ENCODE measurements at regions of chr2 and their contacts with region 1.

Region 1: DNA sequence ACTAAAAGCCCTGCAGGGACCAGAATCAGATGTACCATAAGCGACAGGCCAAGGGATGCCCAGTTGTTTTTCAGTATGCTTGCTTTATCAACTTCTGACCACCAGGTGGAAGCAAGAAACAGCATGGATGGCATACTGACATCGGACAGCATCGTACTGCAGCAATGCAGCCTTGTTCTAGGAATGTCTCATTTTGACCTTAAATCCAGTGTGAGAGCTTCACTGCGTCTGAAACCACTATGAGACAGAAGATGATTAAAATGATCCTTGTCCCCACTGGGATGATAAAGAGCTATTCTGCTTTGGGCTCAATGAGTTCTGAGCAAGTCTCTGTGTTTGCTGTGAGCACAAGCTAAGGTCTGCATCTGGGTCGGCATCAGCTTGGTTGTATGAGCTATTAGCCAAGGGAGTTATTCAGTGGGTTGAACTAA is 54.3 kb downstream of the CDK15 start:
- DNase-seq: peak in 1 of 2 donors; percentile 75
- ATAC-seq: peak; percentile 64 to 80 (median 73)
- H3K4me3 ChIP-seq: no peak overlapping the region
- H3K4me3 Mint-ChIP-seq: no peak overlapping the region
- H3K27ac ChIP-seq: no peak overlapping the region
- H3K27ac Mint-ChIP-seq: no peak overlapping the region
- H3K4me1 ChIP-seq: no peaks in the 10 kb centered on the region
- H3K4me1 Mint-ChIP-seq: peaks cover 6 to 12% of the 10 kb centered on the region in 2 donors
- H3K27me3 ChIP-seq: peaks cover 4% of the 10 kb centered on the region
- H3K27me3 Mint-ChIP-seq: peaks cover 19 to 25% of the 10 kb centered on the region in 2 donors
- CTCF ChIP-seq: peak; percentile 69

Region 2: GRCh38 chr2:202178342-202178958 is 317.8 kb after region 1 on chr2:
- intact Hi-C with region 1: loop called (anchors 1 kb)
- DNase-seq: peak in 1 of 2 donors; percentile 76
- ATAC-seq: peak; percentile 64 to 77 (median 75)
- H3K4me3 ChIP-seq: no peak overlapping the region
- H3K4me3 Mint-ChIP-seq: no peak overlapping the region
- H3K27ac ChIP-seq: no peak overlapping the region
- H3K27ac Mint-ChIP-seq: no peak overlapping the region
- H3K4me1 ChIP-seq: no peaks in the 10 kb centered on the region
- H3K4me1 Mint-ChIP-seq: no peaks in the 10 kb centered on the region
- H3K27me3 ChIP-seq: no peaks in the 10 kb centered on the region
- H3K27me3 Mint-ChIP-seq: peaks cover 0 to 3% of the 10 kb centered on the region in 2 donors
- CTCF ChIP-seq: peak; percentile 78

Measured in natural killer cell (primary cell).